Heart left ventricle (tissue), 16 donors: ENCODE measurements at regions of chr15 and their contacts with region 1.

Region 1: DNA sequence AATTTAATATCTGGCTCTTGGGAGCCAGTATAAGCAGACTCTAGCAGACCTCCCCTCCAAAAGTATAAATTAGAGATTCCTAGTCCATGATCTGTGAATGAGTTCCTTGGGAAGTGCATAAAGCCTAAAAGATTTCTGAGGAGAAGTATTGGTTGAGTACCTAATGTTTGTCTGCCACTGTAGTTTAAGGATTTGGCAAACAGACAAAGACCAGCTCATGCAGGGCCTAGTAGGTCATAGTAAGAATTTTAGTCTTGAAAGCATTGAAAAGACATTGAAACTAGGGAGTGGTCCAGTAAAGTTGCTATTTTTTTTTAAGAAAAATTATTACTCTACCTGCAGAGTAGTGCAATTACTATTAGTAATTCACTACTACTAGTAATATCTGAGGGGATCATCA is 67.5 kb downstream of the SPRED1 start:
- DNase-seq: no peak
- ATAC-seq: no peak
- H3K4me3 ChIP-seq: no peak overlapping the region
- H3K27ac ChIP-seq: no peak overlapping the region
- H3K4me1 ChIP-seq: peaks cover 0 to 17% (median 0%) of the 10 kb centered on the region in 12 donors
- H3K27me3 ChIP-seq: no peaks in the 10 kb centered on the region
- CTCF ChIP-seq: no peak
- POLR2A ChIP-seq: no peak

Region 2: GRCh38 chr15:38266247-38266986 is 53.8 kb before region 1 on chr15:
- intact Hi-C with region 1: loop called in 1 of 10 experiments (anchors 5 kb)
- DNase-seq: no peak
- ATAC-seq: peak in 2 of 4 donors; percentile 9 to 43
- H3K4me3 ChIP-seq: no peak overlapping the region
- H3K27ac ChIP-seq: no peak overlapping the region
- H3K4me1 ChIP-seq: peaks cover 0 to 60% (median 18%) of the 10 kb centered on the region in 12 donors
- H3K27me3 ChIP-seq: no peaks in the 10 kb centered on the region
- CTCF ChIP-seq: no peak
- POLR2A ChIP-seq: no peak